Ovary (tissue), 10 donors: ENCODE measurements at regions of chr15 and their contacts with region 1.

Region 1: GRCh38 chr15:51380999-51381795 is 39.7 kb downstream of the GLDN start:
- DNase-seq: peak in 1 of 5 donors; percentile 39
- H3K4me3 ChIP-seq: no peak overlapping the region
- H3K27ac ChIP-seq: no peak overlapping the region
- H3K4me1 ChIP-seq: no peaks in the 10 kb centered on the region
- H3K27me3 ChIP-seq: no peaks in the 10 kb centered on the region
- CTCF ChIP-seq: peak; percentile 17 to 73 (median 65)
- EP300 ChIP-seq: no peak
- POLR2A ChIP-seq: no peak

Region 2: DNA sequence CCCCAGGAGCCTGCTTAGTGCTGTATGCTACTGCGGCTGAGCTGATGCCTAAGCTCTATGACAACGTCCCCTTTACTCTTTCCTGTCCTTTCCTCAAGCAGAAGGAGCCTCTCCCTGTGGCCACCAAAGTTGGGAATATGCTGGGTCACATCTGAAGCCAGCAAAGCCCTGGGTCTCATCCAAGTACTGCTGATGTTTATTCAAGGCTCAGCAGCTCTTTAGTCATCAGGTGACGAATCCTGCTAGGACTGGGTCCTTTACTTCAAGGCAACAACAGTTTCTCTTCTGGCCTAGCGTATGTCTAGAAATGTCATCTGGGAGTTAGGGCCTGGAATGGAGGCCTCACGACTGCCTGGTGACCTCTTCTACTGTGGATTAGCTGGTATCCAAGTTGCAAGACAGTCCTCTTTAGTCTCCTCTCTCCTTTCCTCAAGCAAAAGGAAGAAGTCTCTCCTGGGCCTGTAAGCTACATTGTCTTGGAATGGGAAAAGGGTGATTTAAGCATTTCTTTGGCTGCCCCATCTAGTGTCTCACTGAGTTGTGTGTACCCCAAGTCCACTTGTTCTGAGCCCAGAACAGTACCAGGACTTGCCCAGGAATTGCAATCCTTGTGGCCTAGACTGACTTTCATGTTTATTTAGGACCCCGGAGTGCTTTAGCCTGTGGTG is 350.4 kb before region 1 on chr15:
- intact Hi-C with region 1: no loop called
- DNase-seq: no peak
- H3K4me3 ChIP-seq: no peak overlapping the region
- H3K27ac ChIP-seq: no peak overlapping the region
- H3K4me1 ChIP-seq: no peaks in the 10 kb centered on the region
- H3K27me3 ChIP-seq: no peaks in the 10 kb centered on the region
- CTCF ChIP-seq: no peak
- EP300 ChIP-seq: no peak
- POLR2A ChIP-seq: no peak

Region 3: GRCh38 chr15:51162865-51163762 is 218.1 kb before region 1 on chr15:
- intact Hi-C with region 1: loop called in 1 of 4 experiments (anchors 10 kb)
- DNase-seq: peak; percentile 42 to 70 (median 68)
- H3K4me3 ChIP-seq: peak overlapping the region; percentile 25
- H3K27ac ChIP-seq: no peak overlapping the region
- H3K4me1 ChIP-seq: no peaks in the 10 kb centered on the region
- H3K27me3 ChIP-seq: no peaks in the 10 kb centered on the region
- CTCF ChIP-seq: peak; percentile 45 to 65 (median 64)
- EP300 ChIP-seq: no peak
- POLR2A ChIP-seq: no peak

Region 4: GRCh38 chr15:51229907-51230330 is 151.3 kb before region 1 on chr15:
- intact Hi-C with region 1: loop called in 1 of 4 experiments (anchors 5 kb)
- DNase-seq: no peak
- H3K4me3 ChIP-seq: no peak overlapping the region
- H3K27ac ChIP-seq: no peak overlapping the region
- H3K4me1 ChIP-seq: no peaks in the 10 kb centered on the region
- H3K27me3 ChIP-seq: no peaks in the 10 kb centered on the region
- CTCF ChIP-seq: peak in 1 of 3 donors; percentile 41
- EP300 ChIP-seq: no peak
- POLR2A ChIP-seq: no peak

Region 5: DNA sequence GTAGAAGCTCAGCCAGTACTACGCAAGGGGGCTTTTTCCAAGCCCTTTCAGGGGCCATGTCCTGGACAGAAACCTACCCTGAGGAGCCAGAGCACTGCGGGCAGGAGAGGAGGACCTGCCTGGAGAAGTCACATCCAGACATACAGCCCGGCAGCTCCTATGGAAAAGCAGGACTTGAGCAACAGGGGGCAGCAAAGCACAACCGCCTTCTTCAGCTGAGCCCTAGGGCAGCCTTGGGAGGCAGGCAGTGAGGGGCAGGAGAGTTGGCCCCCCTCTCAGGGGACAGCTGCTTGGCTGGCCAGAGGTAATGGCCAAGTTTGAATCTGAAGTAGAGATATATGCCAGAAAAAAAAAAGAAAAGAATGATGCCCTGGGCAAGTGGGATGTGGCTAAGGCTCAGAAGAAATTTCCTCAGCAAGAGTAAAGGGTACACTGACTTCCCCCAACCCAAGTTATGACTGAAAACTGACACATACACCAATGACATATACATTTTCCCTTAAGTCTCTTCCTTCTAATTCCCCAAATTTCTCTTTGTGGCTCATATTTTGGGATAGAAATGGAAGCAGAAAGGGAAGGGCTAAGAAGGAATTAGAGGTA is 99.7 kb before region 1 on chr15:
- intact Hi-C with region 1: loop called in 2 of 4 experiments (anchors 2 to 10 kb)
- DNase-seq: peak in 3 of 5 donors; percentile 28 to 49 (median 43)
- H3K4me3 ChIP-seq: no peak overlapping the region
- H3K27ac ChIP-seq: no peak overlapping the region
- H3K4me1 ChIP-seq: no peaks in the 10 kb centered on the region
- H3K27me3 ChIP-seq: no peaks in the 10 kb centered on the region
- CTCF ChIP-seq: peak in 1 of 3 donors; percentile 18
- EP300 ChIP-seq: no peak
- POLR2A ChIP-seq: no peak

Region 6: GRCh38 chr15:51425517-51426367 is 44.5 kb after region 1 on chr15:
- intact Hi-C with region 1: no loop called
- DNase-seq: no peak
- H3K4me3 ChIP-seq: no peak overlapping the region
- H3K27ac ChIP-seq: no peak overlapping the region
- H3K4me1 ChIP-seq: no peaks in the 10 kb centered on the region
- H3K27me3 ChIP-seq: no peaks in the 10 kb centered on the region
- CTCF ChIP-seq: no peak
- EP300 ChIP-seq: no peak
- POLR2A ChIP-seq: no peak